HCT116 (cell line): ENCODE measurements at regions of chr3 and their contacts with region 1.

Region 1: DNA sequence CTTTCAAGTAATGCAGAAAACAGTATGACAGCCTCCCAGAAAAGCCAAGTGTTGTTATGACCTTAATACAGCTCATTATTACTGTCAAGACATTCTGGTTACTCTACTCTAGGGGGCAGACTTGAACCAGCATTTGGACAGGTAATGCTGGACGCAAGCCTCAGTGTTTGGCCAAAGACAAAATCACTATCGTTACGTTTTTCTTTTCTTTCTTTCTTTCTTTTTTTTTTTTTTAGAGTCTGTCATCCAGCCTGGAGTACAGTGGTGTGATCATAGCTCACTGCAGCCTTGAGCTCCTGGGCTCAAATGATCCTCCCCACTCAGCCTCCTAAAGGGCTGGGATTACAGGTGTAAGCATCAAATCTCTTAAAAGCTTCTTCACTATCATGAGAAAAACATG is 29.4 kb upstream of the TMEM45A start:
- DNase-seq: peak; percentile 45
- ATAC-seq: peak; percentile 98
- H3K4me3 ChIP-seq: no peak overlapping the region
- H3K27ac ChIP-seq: no peak overlapping the region
- H3K4me1 ChIP-seq: peaks cover 0 to 4% of the 10 kb centered on the region in 2 experiments; a peak in 1 of 4 replicates
- H3K27me3 ChIP-seq: no peaks in the 10 kb centered on the region
- CTCF ChIP-seq: peak; percentile 65 to 85 (median 80); a peak in 5 of 6 replicates
- POLR2A ChIP-seq: no peak
- RAD21 ChIP-seq: peak; percentile 92

Region 2: GRCh38 chr3:99833617-99834205 is 629.3 kb before region 1 on chr3:
- CTCF ChIA-PET with region 1: interaction called, 9 read pairs
- POLR2A ChIA-PET with region 1: no interaction called
- RAD21 ChIA-PET with region 1: no interaction called
- intact Hi-C with region 1: loop called (anchors 10 kb)
- DNase-seq: no peak
- ATAC-seq: no peak
- H3K4me3 ChIP-seq: no peak overlapping the region
- H3K27ac ChIP-seq: no peak overlapping the region
- H3K4me1 ChIP-seq: no peaks in the 10 kb centered on the region
- H3K27me3 ChIP-seq: no peaks in the 10 kb centered on the region
- CTCF ChIP-seq: no peak
- POLR2A ChIP-seq: no peak
- RAD21 ChIP-seq: no peak

Region 3: GRCh38 chr3:100306695-100307094 is 156.3 kb before region 1 on chr3:
- CTCF ChIA-PET with region 1: no interaction called
- POLR2A ChIA-PET with region 1: no interaction called
- RAD21 ChIA-PET with region 1: no interaction called
- intact Hi-C with region 1: no loop called
- DNase-seq: no peak
- ATAC-seq: no peak
- H3K4me3 ChIP-seq: no peak overlapping the region
- H3K27ac ChIP-seq: no peak overlapping the region
- H3K4me1 ChIP-seq: no peaks in the 10 kb centered on the region
- H3K27me3 ChIP-seq: no peaks in the 10 kb centered on the region
- CTCF ChIP-seq: no peak
- POLR2A ChIP-seq: no peak
- RAD21 ChIP-seq: no peak

Region 4: GRCh38 chr3:100590114-100590839 is 127.3 kb after region 1 on chr3:
- CTCF ChIA-PET with region 1: interaction called, 107 read pairs
- POLR2A ChIA-PET with region 1: interaction called, 5 read pairs
- RAD21 ChIA-PET with region 1: interaction called, 16 read pairs
- intact Hi-C with region 1: loop called (anchors 1 kb)
- DNase-seq: peak; percentile 63
- ATAC-seq: peak; percentile 91
- H3K4me3 ChIP-seq: peak overlapping the region; percentile 16 to 42; a peak in 3 of 4 replicates
- H3K27ac ChIP-seq: no peak overlapping the region
- H3K4me1 ChIP-seq: peaks cover 0 to 5% of the 10 kb centered on the region in 2 experiments; a peak in 1 of 4 replicates
- H3K27me3 ChIP-seq: no peaks in the 10 kb centered on the region
- CTCF ChIP-seq: peak; percentile 75 to 89 (median 76)
- POLR2A ChIP-seq: no peak
- RAD21 ChIP-seq: peak; percentile 87

Region 5: GRCh38 chr3:100634493-100635272 is 171.7 kb after region 1 on chr3:
- CTCF ChIA-PET with region 1: interaction called, 19 read pairs
- POLR2A ChIA-PET with region 1: no interaction called
- RAD21 ChIA-PET with region 1: interaction called, 5 to 8 read pairs
- intact Hi-C with region 1: no loop called
- DNase-seq: peak; percentile 31
- ATAC-seq: peak; percentile 67
- H3K4me3 ChIP-seq: no peak overlapping the region
- H3K27ac ChIP-seq: no peak overlapping the region
- H3K4me1 ChIP-seq: no peaks in the 10 kb centered on the region
- H3K27me3 ChIP-seq: no peaks in the 10 kb centered on the region
- CTCF ChIP-seq: peak in 2 of 3 experiments; percentile 16 to 33; a peak in 3 of 6 replicates
- POLR2A ChIP-seq: no peak
- RAD21 ChIP-seq: peak; percentile 61

Region 6: GRCh38 chr3:100796556-100796955 is 333.6 kb after region 1 on chr3:
- CTCF ChIA-PET with region 1: interaction called, 32 read pairs
- POLR2A ChIA-PET with region 1: no interaction called
- RAD21 ChIA-PET with region 1: interaction called, 4 to 5 read pairs
- intact Hi-C with region 1: loop called (anchors 5 kb)
- DNase-seq: peak; percentile 22
- ATAC-seq: peak; percentile 75
- H3K4me3 ChIP-seq: no peak overlapping the region
- H3K27ac ChIP-seq: no peak overlapping the region
- H3K4me1 ChIP-seq: peaks cover 0 to 6% of the 10 kb centered on the region in 2 experiments; a peak in 1 of 4 replicates
- H3K27me3 ChIP-seq: no peaks in the 10 kb centered on the region
- CTCF ChIP-seq: peak; percentile 26 to 50 (median 42); a peak in 4 of 6 replicates
- POLR2A ChIP-seq: no peak
- RAD21 ChIP-seq: peak; percentile 62

Region 7: GRCh38 chr3:101195951-101196713 is 733.1 kb after region 1 on chr3:
- CTCF ChIA-PET with region 1: interaction called, 30 read pairs
- POLR2A ChIA-PET with region 1: no interaction called
- RAD21 ChIA-PET with region 1: interaction called, 3 to 4 read pairs
- intact Hi-C with region 1: loop called (anchors 2 kb)
- DNase-seq: peak; percentile 48
- ATAC-seq: peak; percentile 84
- H3K4me3 ChIP-seq: no peak overlapping the region
- H3K27ac ChIP-seq: no peak overlapping the region
- H3K4me1 ChIP-seq: no peaks in the 10 kb centered on the region
- H3K27me3 ChIP-seq: no peaks in the 10 kb centered on the region
- CTCF ChIP-seq: peak; percentile 52 to 78 (median 69)
- POLR2A ChIP-seq: no peak
- RAD21 ChIP-seq: peak; percentile 85